T-cell (primary cell): ENCODE measurements at regions of chr2 and their contacts with region 1.

Region 1: GRCh38 chr2:86747711-86748639 is 27.9 kb downstream of the RMND5A start:
- DNase-seq: no peak
- ATAC-seq: no peak
- H3K4me3 ChIP-seq: no peak overlapping the region
- H3K4me3 Mint-ChIP-seq: no peak overlapping the region
- H3K27ac ChIP-seq: no peak overlapping the region
- H3K27ac Mint-ChIP-seq: no peak overlapping the region
- H3K4me1 ChIP-seq: peaks cover 0 to 5% of the 10 kb centered on the region in 2 experiments
- H3K4me1 Mint-ChIP-seq: peaks cover 37 to 61% (median 56%) of the 10 kb centered on the region in 3 donors
- H3K27me3 ChIP-seq: no peaks in the 10 kb centered on the region
- H3K27me3 Mint-ChIP-seq: no peaks in the 10 kb centered on the region

Region 2: GRCh38 chr2:86775338-86775737 is 27.4 kb after region 1 on chr2:
- CTCF ChIA-PET with region 1: no interaction called
- POLR2A ChIA-PET with region 1: interaction called in 1 of 2 experiments, 12 read pairs
- DNase-seq: no peak
- ATAC-seq: no peak
- H3K4me3 ChIP-seq: no peak overlapping the region
- H3K4me3 Mint-ChIP-seq: no peak overlapping the region
- H3K27ac ChIP-seq: no peak overlapping the region
- H3K27ac Mint-ChIP-seq: no peak overlapping the region
- H3K4me1 ChIP-seq: no peaks in the 10 kb centered on the region
- H3K4me1 Mint-ChIP-seq: peaks cover 0 to 4% (median 2%) of the 10 kb centered on the region in 3 donors
- H3K27me3 ChIP-seq: no peaks in the 10 kb centered on the region
- H3K27me3 Mint-ChIP-seq: no peaks in the 10 kb centered on the region